ENCODE measurements at regions of chr10 and their contacts with region 1.

Region 1: DNA sequence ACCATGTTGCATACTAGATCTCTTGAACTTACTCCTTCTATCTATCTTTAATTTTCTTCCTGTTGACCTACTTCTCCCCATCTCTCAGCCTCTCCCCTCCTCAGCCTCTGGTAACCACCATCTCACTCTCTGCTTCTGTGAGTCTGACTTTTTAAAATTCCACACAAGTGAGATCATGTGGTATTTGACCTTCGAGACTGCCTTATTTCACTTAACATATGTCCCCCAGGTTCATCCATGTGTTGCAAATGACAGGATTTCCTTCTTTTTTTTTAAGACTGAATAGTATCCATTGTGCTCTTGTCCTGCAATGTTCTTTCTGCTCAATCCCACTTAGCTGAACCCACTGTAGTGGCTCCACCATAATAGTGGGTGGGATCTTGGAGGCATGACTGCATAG is 51.4 kb upstream of the DNAJC1 start:
- DNase-seq: no peak
- H3K4me3 ChIP-seq: no peak overlapping the region
- H3K27ac ChIP-seq: no peak overlapping the region
- H3K4me1 ChIP-seq: no peaks in the 10 kb centered on the region
- H3K27me3 ChIP-seq: no peaks in the 10 kb centered on the region
- CTCF ChIP-seq: no peak
- POLR2A ChIP-seq: no peak

Region 2: DNA sequence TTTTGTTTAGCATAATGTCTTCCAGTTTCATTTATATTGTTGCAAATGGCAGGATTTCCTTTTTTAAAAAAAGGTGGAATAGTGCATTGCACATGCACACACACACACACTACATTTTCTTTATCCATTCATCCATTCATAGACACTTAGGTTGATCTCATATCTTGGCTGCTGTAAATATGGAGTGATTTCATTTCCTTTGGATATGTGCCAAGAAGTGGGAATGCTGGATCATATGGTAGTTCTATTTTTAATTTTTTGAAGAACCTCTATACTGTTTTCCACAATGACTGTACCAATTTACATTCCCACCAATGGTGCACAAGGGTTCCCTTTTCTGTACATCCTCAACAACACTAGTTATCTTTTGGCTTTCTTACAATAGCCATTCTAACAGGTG is 94.0 kb after region 1 on chr10:
- intact Hi-C with region 1: loop called (anchors 5 kb)
- DNase-seq: no peak
- H3K4me3 ChIP-seq: no peak overlapping the region
- H3K27ac ChIP-seq: no peak overlapping the region
- H3K4me1 ChIP-seq: no peaks in the 10 kb centered on the region
- H3K27me3 ChIP-seq: no peaks in the 10 kb centered on the region
- CTCF ChIP-seq: no peak
- POLR2A ChIP-seq: no peak

Measured in vagina (tissue), 2 donors.